Dorsolateral prefrontal cortex (tissue), 120 donors: ENCODE measurements at regions of chr1 and their contacts with region 1.

Region 1: GRCh38 chr1:14242123-14242522 is 356.4 kb upstream of the KAZN start:
- DNase-seq: no peak
- H3K4me3 ChIP-seq: no peak overlapping the region
- H3K27ac ChIP-seq: no peak overlapping the region
- H3K27me3 ChIP-seq: no peaks in the 10 kb centered on the region
- CTCF ChIP-seq: no peak

Region 2: GRCh38 chr1:14205066-14205465 is 37.1 kb before region 1 on chr1:
- intact Hi-C with region 1: no loop called
- DNase-seq: no peak
- H3K4me3 ChIP-seq: no peak overlapping the region
- H3K27ac ChIP-seq: no peak overlapping the region
- H3K27me3 ChIP-seq: no peaks in the 10 kb centered on the region
- CTCF ChIP-seq: no peak

Region 3: DNA sequence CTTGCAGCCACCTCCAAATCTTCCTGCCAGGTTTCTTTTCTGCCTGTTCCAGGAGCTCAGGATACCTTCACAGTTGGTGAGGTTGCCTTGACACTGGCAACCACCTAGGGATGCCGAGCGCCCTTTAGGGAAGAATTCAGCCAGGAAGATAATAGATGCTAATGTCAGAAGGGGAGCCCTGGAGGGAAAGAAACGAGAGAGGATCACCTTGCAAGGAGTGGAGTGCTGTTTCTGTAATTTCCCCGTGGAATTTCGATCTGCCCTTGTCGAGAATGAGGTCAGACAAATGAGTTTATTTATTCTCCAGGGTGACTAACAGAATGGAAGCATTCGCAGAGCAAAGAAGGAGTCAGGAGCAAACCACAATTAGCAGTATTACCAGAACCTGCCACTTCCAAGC is 40.6 kb after region 1 on chr1:
- intact Hi-C with region 1: no loop called
- DNase-seq: peak in 1 of 10 donors; percentile 33
- H3K4me3 ChIP-seq: no peak overlapping the region
- H3K27ac ChIP-seq: no peak overlapping the region
- H3K27me3 ChIP-seq: no peaks in the 10 kb centered on the region
- CTCF ChIP-seq: no peak

Region 4: GRCh38 chr1:14296795-14297194 is 54.7 kb after region 1 on chr1:
- intact Hi-C with region 1: no loop called
- DNase-seq: no peak
- H3K4me3 ChIP-seq: no peak overlapping the region
- H3K27ac ChIP-seq: no peak overlapping the region
- H3K27me3 ChIP-seq: no peaks in the 10 kb centered on the region
- CTCF ChIP-seq: no peak

Region 5: GRCh38 chr1:14320518-14320917 is 78.4 kb after region 1 on chr1:
- intact Hi-C with region 1: no loop called
- DNase-seq: no peak
- H3K4me3 ChIP-seq: no peak overlapping the region
- H3K27ac ChIP-seq: no peak overlapping the region
- H3K27me3 ChIP-seq: no peaks in the 10 kb centered on the region
- CTCF ChIP-seq: no peak

Region 6: DNA sequence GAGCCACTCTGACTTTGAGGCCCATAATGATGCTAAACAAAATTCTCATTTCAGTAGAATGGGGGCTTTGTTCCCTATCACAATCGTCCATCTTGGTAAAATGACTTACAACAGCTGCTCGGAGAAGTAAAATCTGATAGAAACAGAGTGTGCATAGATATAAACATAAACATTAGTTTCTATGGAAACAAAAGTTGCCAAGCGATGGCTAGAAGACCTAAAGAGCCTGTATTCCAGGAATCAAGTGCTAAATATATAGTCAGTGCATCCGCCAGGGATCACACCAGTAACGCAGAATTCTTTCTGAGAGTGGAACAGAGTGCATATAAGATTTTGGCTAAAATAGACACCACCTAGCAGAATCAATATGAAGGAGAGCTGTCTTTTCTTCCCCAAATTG is 265.1 kb after region 1 on chr1:
- intact Hi-C with region 1: loop called in 1 of 2 experiments (anchors 10 kb)
- DNase-seq: no peak
- H3K4me3 ChIP-seq: no peak overlapping the region
- H3K27ac ChIP-seq: peak overlapping the region in 42 of 59 donors; percentile 0 to 80 (median 48)
- H3K27me3 ChIP-seq: no peaks in the 10 kb centered on the region
- CTCF ChIP-seq: no peak